Activated CD4-positive, alpha-beta T cell treated with anti-CD3 and anti-CD28 coated beads, Interleukin-2, amount 10 ng/mL, durations not matched to agents 24 days and 14 days (primary cell): ENCODE measurements at regions of chr18 and their contacts with region 1.

Region 1: GRCh38 chr18:61992285-61992684 is 99.5 kb upstream of the RNF152 start:
- DNase-seq: peak; percentile 41
- H3K4me3 Mint-ChIP-seq: no peak overlapping the region
- H3K27ac Mint-ChIP-seq: no peak overlapping the region
- H3K4me1 Mint-ChIP-seq: peaks cover 7% of the 10 kb centered on the region
- H3K27me3 Mint-ChIP-seq: peaks cover 2% of the 10 kb centered on the region

Region 2: DNA sequence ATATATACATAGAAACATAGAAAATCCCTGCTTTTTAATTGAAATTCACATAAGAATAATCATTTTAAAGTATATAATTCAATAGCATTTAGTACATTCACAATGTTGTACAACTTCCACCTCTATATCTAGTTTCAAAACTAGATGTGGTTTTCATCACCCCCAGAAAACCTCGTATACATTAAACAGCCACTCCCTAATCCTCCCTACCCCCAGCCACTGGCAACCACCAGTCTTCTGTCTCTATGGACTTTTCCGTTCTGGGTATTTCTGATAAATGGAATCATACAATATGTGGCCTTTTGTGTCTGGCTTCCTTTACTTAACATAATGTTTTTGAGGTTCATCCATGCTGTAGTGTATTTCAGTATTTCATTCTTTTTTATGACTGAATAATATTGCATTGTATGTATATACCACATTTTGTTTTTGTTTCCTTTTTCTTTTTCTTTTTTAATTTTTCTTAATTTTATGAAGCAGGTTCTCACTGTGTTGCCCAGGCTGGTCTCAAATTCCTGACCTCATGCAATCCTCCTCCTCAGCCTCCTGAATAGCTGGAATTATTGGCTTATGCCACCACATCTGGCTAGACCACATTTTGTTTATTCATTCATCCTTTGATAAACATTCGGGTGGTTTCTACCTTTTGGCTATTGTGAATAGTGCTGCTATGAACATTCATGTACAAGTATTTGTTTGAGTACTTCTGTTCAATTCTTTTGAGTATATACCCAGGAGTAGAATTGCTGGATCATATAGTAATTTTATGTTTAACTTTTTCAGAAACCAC is 48.9 kb before region 1 on chr18:
- intact Hi-C with region 1: loop called (anchors 5 kb)
- DNase-seq: no peak
- H3K4me3 Mint-ChIP-seq: no peak overlapping the region
- H3K27ac Mint-ChIP-seq: no peak overlapping the region
- H3K4me1 Mint-ChIP-seq: peaks cover 15% of the 10 kb centered on the region
- H3K27me3 Mint-ChIP-seq: peaks cover 26% of the 10 kb centered on the region

Region 3: GRCh38 chr18:62009521-62009920 is 17.2 kb after region 1 on chr18:
- intact Hi-C with region 1: no loop called
- DNase-seq: no peak
- H3K4me3 Mint-ChIP-seq: no peak overlapping the region
- H3K27ac Mint-ChIP-seq: no peak overlapping the region
- H3K4me1 Mint-ChIP-seq: no peaks in the 10 kb centered on the region
- H3K27me3 Mint-ChIP-seq: peaks cover 5% of the 10 kb centered on the region

Region 4: DNA sequence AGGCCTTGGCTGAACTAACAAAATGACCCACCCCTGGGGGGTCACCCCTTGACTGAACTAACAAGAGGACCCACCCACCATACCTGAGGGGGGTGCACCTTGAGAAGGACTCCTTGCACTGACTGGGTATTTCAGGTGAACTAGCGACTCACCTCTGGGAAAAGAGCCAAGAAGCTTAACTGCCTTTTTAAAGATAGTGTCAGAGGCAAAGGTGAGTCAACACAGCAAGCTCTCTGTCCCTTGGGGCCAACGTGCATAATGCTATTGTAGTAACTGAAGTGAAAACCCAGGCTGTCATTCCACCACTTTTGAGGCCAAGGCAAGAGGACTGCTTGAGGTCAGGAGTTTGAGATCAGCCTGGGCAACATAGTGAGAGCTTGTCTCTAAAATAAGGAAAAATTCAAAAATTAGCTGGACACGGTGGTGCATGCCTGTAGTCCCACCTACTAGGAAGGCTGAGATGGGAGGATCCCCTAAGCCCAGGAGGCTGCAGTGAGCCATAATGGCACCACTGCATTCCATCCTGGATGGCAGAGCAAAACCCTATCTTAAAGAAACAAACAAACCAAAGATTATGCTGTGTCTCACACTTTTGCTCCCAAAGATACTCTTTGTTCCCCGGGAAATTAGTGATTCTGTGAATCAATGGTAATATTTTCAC is 494.1 kb after region 1 on chr18:
- intact Hi-C with region 1: no loop called
- DNase-seq: peak; percentile 28
- H3K4me3 Mint-ChIP-seq: no peak overlapping the region
- H3K27ac Mint-ChIP-seq: no peak overlapping the region
- H3K4me1 Mint-ChIP-seq: peaks cover 3% of the 10 kb centered on the region
- H3K27me3 Mint-ChIP-seq: peaks cover 19% of the 10 kb centered on the region